Activated CD8-positive, alpha-beta T cell treated with anti-CD3 and anti-CD28 coated beads, Interleukin-2, amount 10 ng/mL, durations not matched to agents 7 days and 5 days (primary cell): ENCODE measurements at regions of chr1 and their contacts with region 1.

Region 1: DNA sequence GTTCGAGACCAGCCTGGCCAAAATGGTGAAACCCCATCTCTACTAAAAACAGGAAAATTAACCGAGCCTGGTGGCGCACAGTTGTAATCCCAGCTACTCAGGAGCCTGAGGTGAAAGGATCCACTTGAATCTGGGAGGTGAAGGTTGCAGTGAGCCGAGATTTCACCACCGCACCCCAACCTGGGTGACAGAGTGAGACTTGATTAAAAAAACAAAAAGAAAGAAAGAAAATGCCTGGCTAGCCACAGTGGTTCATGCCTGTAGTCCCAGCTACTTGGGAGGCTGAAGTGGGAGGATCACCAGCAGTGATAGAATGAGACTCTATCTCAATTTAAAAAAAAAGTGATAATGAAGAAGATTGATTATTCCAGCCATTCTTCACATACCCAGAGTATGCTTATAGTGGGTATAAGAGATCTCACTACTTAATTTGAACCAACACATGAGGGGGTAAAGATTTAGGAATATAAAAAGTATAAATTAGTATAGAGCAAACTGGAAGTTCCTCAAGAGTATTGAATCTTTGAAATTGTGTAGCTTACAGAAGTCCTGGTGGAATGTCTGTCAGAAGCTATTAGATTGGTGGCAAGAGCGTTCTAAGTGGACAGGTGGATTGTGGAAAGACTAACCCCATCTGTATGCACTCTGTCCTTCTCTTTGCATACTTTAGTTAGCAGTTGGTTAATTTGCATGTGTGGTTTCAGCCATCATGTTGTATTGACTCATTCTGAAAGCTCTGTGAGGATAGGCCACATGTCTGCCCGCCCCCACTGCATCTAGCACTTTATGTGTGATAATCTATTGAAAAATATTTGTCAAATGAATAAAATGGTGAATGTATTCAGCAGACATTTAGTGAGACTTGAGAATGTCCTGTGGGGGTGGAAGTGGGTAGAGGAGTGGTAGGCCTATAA is 25.0 kb downstream of the RLF start:
- DNase-seq: peak; percentile 60
- ATAC-seq: peak; percentile 88
- H3K4me3 Mint-ChIP-seq: no peak overlapping the region
- H3K27ac Mint-ChIP-seq: peak overlapping the region; percentile 19
- H3K4me1 Mint-ChIP-seq: peaks cover 46% of the 10 kb centered on the region
- H3K27me3 Mint-ChIP-seq: no peaks in the 10 kb centered on the region

Region 2: GRCh38 chr1:40174788-40175187 is 11.4 kb before region 1 on chr1:
- CTCF ChIA-PET with region 1: interaction called, 13 read pairs
- POLR2A ChIA-PET with region 1: no interaction called
- DNase-seq: no peak
- ATAC-seq: no peak
- H3K4me3 Mint-ChIP-seq: no peak overlapping the region
- H3K27ac Mint-ChIP-seq: no peak overlapping the region
- H3K4me1 Mint-ChIP-seq: peaks cover 36% of the 10 kb centered on the region
- H3K27me3 Mint-ChIP-seq: no peaks in the 10 kb centered on the region